PC-9 (cell line): ENCODE measurements at regions of chr2 and their contacts with region 1.

Region 1: GRCh38 chr2:222057347-222058073 is 241.3 kb downstream of the PAX3 start:
- DNase-seq: no peak
- H3K4me3 ChIP-seq: no peak overlapping the region
- H3K27ac ChIP-seq: no peak overlapping the region
- H3K4me1 ChIP-seq: no peaks in the 10 kb centered on the region
- H3K27me3 ChIP-seq: peaks cover 9% of the 10 kb centered on the region
- CTCF ChIP-seq: peak; percentile 98

Region 2: GRCh38 chr2:222024932-222025880 is 32.3 kb before region 1 on chr2:
- CTCF ChIA-PET with region 1: interaction called, 4 read pairs
- POLR2A ChIA-PET with region 1: no interaction called
- intact Hi-C with region 1: loop called (anchors 2 kb)
- DNase-seq: peak; percentile 15 to 62
- H3K4me3 ChIP-seq: no peak overlapping the region
- H3K27ac ChIP-seq: no peak overlapping the region
- H3K4me1 ChIP-seq: no peaks in the 10 kb centered on the region
- H3K27me3 ChIP-seq: no peaks in the 10 kb centered on the region
- CTCF ChIP-seq: peak; percentile 96

Region 3: DNA sequence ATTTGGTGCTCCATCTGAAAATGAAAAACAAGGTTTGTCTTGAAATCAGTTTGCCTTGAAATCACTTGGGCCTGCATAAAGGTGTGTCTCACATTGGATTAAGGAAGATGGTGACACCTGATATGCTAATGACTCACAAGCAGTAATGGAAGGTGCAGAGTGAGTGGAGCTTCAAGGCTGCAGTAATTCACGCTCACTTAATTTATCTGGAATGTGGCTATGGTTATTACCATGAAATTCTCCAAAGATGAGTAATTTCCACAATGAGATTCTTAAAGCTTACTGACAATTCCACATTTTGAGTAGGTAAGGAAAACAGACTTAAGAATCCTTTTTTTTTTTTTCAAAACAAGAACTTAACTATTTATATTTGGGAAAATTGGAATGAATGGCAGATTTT is 84.5 kb after region 1 on chr2:
- CTCF ChIA-PET with region 1: no interaction called
- POLR2A ChIA-PET with region 1: no interaction called
- intact Hi-C with region 1: no loop called
- DNase-seq: peak; percentile 59 to 94
- H3K4me3 ChIP-seq: no peak overlapping the region
- H3K27ac ChIP-seq: 0 out of 2 replicates have a peak overlapping the region, but pooled peaks have one; percentile 1
- H3K4me1 ChIP-seq: peaks cover 25% of the 10 kb centered on the region
- H3K27me3 ChIP-seq: no peaks in the 10 kb centered on the region
- CTCF ChIP-seq: no peak

Region 4: DNA sequence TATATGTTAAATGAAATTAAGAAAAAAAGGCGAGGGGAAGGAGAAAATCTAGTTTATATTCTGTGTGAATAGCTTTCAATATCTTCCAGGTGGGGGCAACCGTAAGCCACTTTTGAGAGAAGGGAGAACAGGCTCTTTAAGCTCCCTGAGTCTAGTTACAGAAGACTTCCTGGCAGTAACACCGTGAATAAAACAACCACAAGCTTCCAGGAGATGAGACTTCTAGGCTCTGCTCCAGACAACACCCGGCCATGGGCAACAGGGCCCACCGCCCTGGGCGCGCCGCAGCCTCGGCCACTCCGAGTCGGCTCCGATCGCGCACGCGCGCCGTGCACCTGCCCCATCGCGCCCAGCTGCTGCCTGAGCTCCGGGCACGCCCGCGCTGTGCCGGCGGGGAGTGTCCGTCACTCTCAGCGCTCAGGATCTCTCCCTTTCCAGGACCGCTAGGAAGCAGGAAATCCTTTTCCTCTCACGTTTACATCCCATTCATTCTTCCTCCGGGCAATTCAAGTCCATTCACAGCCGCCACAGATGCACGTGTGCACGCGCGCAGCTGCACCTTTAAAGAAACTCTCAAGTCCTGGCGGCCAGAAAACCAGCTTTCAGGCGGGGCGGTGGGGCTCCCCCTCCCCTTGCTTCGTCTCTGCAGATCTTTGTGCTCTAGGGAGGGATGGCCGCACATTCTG is 260.7 kb after region 1 on chr2:
- CTCF ChIA-PET with region 1: interaction called, 5 read pairs
- POLR2A ChIA-PET with region 1: no interaction called
- intact Hi-C with region 1: loop called (anchors 1 kb)
- DNase-seq: peak; percentile 74 to 89
- H3K4me3 ChIP-seq: peak overlapping the region; percentile 79
- H3K27ac ChIP-seq: no peak overlapping the region
- H3K4me1 ChIP-seq: peaks cover 5% of the 10 kb centered on the region; the same call in 1 of the 2 replicates
- H3K27me3 ChIP-seq: peaks cover 13% of the 10 kb centered on the region; the same call in 1 of the 2 replicates
- CTCF ChIP-seq: peak; percentile 87